ENCODE measurements at regions of chr11 and their contacts with region 1.

Region 1: GRCh38 chr11:11787305-11788062 is 54.3 kb upstream of the USP47 start:
- DNase-seq: peak; percentile 59
- ATAC-seq: peak; percentile 97
- H3K4me3 ChIP-seq: no peak overlapping the region
- H3K27ac ChIP-seq: no peak overlapping the region
- H3K4me1 ChIP-seq: no peaks in the 10 kb centered on the region; the same call in 1 of the 2 replicates
- H3K27me3 ChIP-seq: no peaks in the 10 kb centered on the region
- CTCF ChIP-seq: peak; percentile 83

Region 2: DNA sequence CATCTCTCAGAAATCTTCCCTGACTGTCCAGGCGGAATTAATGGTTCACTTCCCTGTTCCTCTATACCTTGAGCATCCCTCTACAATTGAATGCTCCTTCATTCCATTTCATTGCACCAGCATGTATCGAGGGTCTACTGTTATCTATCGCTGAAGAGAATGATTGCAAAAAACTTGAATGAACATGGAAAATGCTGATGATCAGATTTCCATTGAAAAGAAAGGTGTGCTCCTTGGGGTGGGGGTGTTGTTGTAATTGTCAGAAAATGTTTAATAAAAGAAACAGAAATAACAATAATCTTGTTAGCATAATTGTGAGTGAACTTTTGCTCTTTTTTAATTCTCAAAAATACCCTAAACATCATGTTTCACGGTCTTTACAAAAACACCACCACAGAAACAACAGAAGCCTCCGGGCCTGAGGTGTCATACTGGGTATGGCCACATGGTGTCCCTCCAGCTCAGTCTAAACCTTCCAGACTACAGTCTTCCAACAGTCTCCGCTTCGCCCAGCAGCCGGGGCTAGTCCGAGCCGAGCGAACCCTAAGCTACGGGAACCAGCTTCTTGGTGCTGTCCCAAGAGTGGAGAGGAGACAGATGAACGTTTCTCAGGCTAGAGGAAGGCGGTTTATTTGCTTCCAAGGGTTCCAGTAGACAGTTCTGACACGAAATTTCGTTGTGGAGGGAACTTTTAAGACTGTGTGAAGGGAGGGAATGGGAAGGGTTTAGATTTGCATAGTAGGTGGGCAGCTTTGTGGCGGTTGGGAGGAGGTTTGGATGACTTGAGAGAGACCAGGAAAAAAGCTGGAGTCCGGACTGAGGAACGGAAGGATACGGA is 853.8 kb before region 1 on chr11:
- CTCF ChIA-PET with region 1: interaction called, 11 read pairs
- POLR2A ChIA-PET with region 1: no interaction called
- in situ Hi-C with region 1: no loop called
- intact Hi-C with region 1: loop called (anchors 5 kb)
- DNase-seq: peak; percentile 96
- ATAC-seq: peak; percentile 77
- H3K4me3 ChIP-seq: peak overlapping the region; percentile 57 to 75
- H3K27ac ChIP-seq: peak overlapping the region; percentile 93
- H3K4me1 ChIP-seq: peaks cover 39% of the 10 kb centered on the region
- H3K27me3 ChIP-seq: no peaks in the 10 kb centered on the region
- CTCF ChIP-seq: peak; percentile 99

Region 3: DNA sequence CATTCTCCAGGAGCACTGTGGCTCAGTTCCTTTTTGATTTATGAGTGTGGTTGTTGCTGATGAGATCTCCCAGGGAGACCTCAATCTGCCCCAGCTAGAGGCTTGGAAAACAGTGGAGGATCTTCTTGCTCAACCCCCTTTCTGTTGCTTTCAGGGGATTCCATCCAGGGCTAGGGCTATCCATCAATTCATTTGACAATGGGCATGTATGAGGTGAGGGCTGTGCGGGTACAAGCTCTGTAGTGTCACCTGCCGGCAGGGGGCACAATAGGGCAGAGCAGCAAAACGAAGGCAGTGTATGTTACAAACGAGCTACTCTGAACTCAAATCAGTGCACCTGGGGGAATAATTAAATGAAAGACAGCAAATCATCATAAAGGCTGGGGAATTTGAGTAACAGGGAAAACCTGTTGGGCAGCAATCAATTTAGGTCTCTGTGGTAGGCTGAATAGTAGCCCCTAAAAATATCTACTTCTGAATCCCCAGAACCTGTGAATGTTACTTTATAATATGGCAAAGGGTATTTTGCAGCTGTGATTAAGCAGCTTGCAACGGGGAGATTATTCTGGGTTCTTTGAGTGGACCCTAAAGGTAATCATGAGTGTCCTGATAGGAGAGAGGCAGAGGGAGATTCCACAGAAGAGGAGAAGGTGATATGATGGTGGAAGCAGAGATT is 759.3 kb before region 1 on chr11:
- CTCF ChIA-PET with region 1: interaction called, 13 read pairs
- POLR2A ChIA-PET with region 1: no interaction called
- in situ Hi-C with region 1: no loop called
- intact Hi-C with region 1: loop called (anchors 2 kb)
- DNase-seq: no peak
- ATAC-seq: peak; percentile 95
- H3K4me3 ChIP-seq: no peak overlapping the region
- H3K27ac ChIP-seq: no peak overlapping the region
- H3K4me1 ChIP-seq: 0 out of 2 replicates have a peak, but pooled peaks cover 5% of the 10 kb centered on the region
- H3K27me3 ChIP-seq: no peaks in the 10 kb centered on the region
- CTCF ChIP-seq: peak; percentile 98

Region 4: GRCh38 chr11:11400635-11401232 is 386.8 kb before region 1 on chr11:
- CTCF ChIA-PET with region 1: no interaction called
- POLR2A ChIA-PET with region 1: no interaction called
- in situ Hi-C with region 1: no loop called
- intact Hi-C with region 1: loop called (anchors 1 kb)
- DNase-seq: no peak
- ATAC-seq: no peak
- H3K4me3 ChIP-seq: no peak overlapping the region
- H3K27ac ChIP-seq: no peak overlapping the region
- H3K4me1 ChIP-seq: no peaks in the 10 kb centered on the region
- H3K27me3 ChIP-seq: no peaks in the 10 kb centered on the region; the same call in 1 of the 2 replicates
- CTCF ChIP-seq: 0 out of 2 replicates have a peak, but pooled peaks have one; percentile 35

Region 5: GRCh38 chr11:11641581-11641980 is 145.9 kb before region 1 on chr11:
- CTCF ChIA-PET with region 1: no interaction called
- POLR2A ChIA-PET with region 1: no interaction called
- in situ Hi-C with region 1: no loop called
- intact Hi-C with region 1: no loop called
- DNase-seq: no peak
- ATAC-seq: no peak
- H3K4me3 ChIP-seq: no peak overlapping the region
- H3K27ac ChIP-seq: no peak overlapping the region
- H3K4me1 ChIP-seq: no peaks in the 10 kb centered on the region
- H3K27me3 ChIP-seq: peaks cover 17% of the 10 kb centered on the region
- CTCF ChIP-seq: no peak

Measured in Panc1 (cell line).